Left lung (tissue), 14 donors: ENCODE measurements at regions of chr19 and their contacts with region 1.

Region 1: GRCh38 chr19:3163230-3163886 is 15.2 kb upstream of the S1PR4 start:
- DNase-seq: peak in 3 of 4 donors; percentile 72 to 93 (median 80)
- ATAC-seq: peak; percentile 93
- H3K4me3 ChIP-seq: no peak overlapping the region
- H3K27ac ChIP-seq: peak overlapping the region in 1 of 2 donors; percentile 94
- H3K4me1 ChIP-seq: peaks cover 0 to 72% of the 10 kb centered on the region in 2 donors
- H3K27me3 ChIP-seq: no peaks in the 10 kb centered on the region
- CTCF ChIP-seq: peak; percentile 91 to 96

Region 2: GRCh38 chr19:2950286-2951124 is 212.9 kb before region 1 on chr19:
- intact Hi-C with region 1: loop called in 1 of 2 experiments (anchors 10 kb)
- DNase-seq: peak; percentile 98 to 100 (median 100)
- ATAC-seq: peak; percentile 93
- H3K4me3 ChIP-seq: peak overlapping the region; percentile 77 to 88
- H3K27ac ChIP-seq: peak overlapping the region; percentile 91 to 93
- H3K4me1 ChIP-seq: peaks cover 4 to 23% of the 10 kb centered on the region in 2 donors
- H3K27me3 ChIP-seq: no peaks in the 10 kb centered on the region
- CTCF ChIP-seq: no peak

Region 3: DNA sequence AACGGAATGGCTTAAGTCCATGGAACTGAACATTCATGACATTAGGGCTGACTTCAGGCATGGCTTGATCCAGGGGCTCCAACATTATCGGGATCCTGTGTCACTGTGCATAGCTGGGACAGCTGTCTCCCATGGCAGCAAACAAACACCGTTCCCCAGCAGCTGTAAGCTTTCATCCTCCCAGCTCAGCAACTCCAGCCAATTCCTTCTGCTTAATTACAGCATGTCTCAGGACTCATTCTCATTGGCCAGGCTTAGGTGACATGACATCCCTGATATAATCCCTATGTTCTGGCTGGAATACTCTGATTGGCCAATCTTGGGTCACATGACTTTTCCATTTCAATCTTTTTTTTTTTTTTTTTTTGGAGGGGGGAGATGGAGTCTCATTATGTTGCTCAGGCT is 90.2 kb before region 1 on chr19:
- intact Hi-C with region 1: no loop called
- DNase-seq: peak in 2 of 4 donors; percentile 82 to 91
- ATAC-seq: peak; percentile 49
- H3K4me3 ChIP-seq: no peak overlapping the region
- H3K27ac ChIP-seq: no peak overlapping the region
- H3K4me1 ChIP-seq: peaks cover 0 to 7% of the 10 kb centered on the region in 2 donors
- H3K27me3 ChIP-seq: no peaks in the 10 kb centered on the region
- CTCF ChIP-seq: no peak